GM12878 (cell line): ENCODE measurements at regions of chr15 and their contacts with region 1.

Region 1: DNA sequence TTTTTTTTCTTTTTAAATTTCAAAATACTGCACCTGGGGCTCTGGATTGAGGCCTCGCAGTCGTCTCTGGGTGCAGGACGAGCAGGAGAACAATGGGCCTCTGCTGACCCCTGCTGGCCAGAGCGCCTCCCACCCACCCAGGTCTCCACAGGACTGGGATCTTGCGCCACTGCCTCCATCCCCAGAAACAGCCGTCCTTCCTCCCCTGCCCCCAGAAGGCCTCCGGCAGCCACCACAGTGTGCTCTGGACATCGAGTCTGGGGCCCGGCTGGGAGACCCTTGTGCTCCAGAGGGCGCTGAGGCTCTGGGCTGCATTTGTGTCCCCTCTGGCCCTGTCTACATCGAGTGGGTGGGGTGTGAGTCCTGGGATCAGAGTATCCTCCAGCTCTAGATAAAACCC is 6.6 kb upstream of the ACSBG1 start:
- DNase-seq: no peak
- ATAC-seq: peak; percentile 99
- H3K4me3 ChIP-seq: no peak overlapping the region
- H3K27ac ChIP-seq: no peak overlapping the region
- H3K4me1 ChIP-seq: no peaks in the 10 kb centered on the region
- H3K27me3 ChIP-seq: no peaks in the 10 kb centered on the region
- CTCF ChIP-seq: peak; percentile 84 to 93 (median 88)
- EP300 ChIP-seq: no peak
- POLR2A ChIP-seq: no peak
- RAD21 ChIP-seq: peak; percentile 86

Region 2: DNA sequence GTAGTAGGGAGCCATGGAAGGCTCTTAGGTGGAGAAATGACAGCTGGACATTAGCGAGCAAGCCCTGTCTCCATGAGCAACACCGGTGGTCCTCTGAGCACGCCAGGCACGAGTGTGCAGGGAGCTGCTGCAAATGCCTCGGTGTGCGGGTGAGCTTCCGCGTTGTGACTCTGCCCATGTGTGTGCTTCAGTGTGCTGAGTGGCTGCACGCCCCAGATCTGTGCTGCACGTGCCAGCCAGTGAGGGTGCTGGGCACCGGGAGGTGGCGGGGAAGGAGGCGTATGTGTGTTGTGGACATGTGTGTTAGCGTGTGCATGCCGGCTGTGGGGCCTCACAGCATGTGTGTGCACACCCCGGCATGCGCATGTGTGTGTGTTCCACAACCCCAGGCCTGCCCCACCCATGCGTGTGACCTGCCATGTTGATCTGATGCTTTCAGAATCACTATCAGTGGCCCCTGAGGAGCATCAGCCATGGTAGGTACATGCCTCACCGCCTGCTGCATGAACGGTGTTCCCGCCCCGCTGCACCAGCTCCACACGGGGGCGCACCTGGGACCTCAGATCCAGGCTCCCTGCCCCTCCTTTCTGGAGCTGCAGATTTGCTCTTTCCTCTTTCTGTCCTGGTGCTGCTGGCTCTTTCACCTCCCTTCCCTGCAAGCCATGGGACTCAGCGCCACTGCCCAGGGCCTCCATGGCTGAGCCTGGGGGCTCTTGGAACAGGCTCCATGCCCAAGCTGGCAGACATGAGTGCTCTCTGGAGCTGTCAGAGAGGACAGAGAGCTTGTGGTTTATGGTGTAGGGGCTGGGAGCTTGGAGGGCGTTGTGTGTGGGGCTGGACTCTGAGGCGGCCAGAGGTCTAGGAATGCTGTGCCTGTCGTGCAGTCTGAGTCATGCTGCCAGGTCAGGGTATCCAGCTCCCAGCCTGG is 332.9 kb before region 1 on chr15:
- CTCF ChIA-PET with region 1: interaction called, 18 read pairs
- POLR2A ChIA-PET with region 1: no interaction called
- RAD21 ChIA-PET with region 1: no interaction called
- SMC1A ChIA-PET with region 1: interaction called, 3 read pairs
- in situ Hi-C with region 1: no loop called
- intact Hi-C with region 1: no loop called
- DNase-seq: no peak
- ATAC-seq: peak; percentile 83
- H3K4me3 ChIP-seq: no peak overlapping the region
- H3K27ac ChIP-seq: no peak overlapping the region
- H3K4me1 ChIP-seq: no peaks in the 10 kb centered on the region
- H3K27me3 ChIP-seq: no peaks in the 10 kb centered on the region; a peak in 1 of 4 replicates
- CTCF ChIP-seq: peak; percentile 37 to 59 (median 46)
- EP300 ChIP-seq: no peak
- POLR2A ChIP-seq: no peak
- RAD21 ChIP-seq: no peak

Region 3: GRCh38 chr15:77966540-77967290 is 274.3 kb before region 1 on chr15:
- CTCF ChIA-PET with region 1: interaction called, 20 read pairs
- POLR2A ChIA-PET with region 1: no interaction called
- RAD21 ChIA-PET with region 1: no interaction called
- SMC1A ChIA-PET with region 1: interaction called, 4 read pairs
- in situ Hi-C with region 1: no loop called
- intact Hi-C with region 1: no loop called
- DNase-seq: no peak
- ATAC-seq: peak; percentile 96
- H3K4me3 ChIP-seq: no peak overlapping the region
- H3K27ac ChIP-seq: no peak overlapping the region
- H3K4me1 ChIP-seq: peaks cover 6% of the 10 kb centered on the region; the same call in 1 of the 2 replicates
- H3K27me3 ChIP-seq: no peaks in the 10 kb centered on the region
- CTCF ChIP-seq: peak; percentile 83 to 85 (median 84)
- EP300 ChIP-seq: no peak
- POLR2A ChIP-seq: no peak
- RAD21 ChIP-seq: peak; percentile 86

Region 4: DNA sequence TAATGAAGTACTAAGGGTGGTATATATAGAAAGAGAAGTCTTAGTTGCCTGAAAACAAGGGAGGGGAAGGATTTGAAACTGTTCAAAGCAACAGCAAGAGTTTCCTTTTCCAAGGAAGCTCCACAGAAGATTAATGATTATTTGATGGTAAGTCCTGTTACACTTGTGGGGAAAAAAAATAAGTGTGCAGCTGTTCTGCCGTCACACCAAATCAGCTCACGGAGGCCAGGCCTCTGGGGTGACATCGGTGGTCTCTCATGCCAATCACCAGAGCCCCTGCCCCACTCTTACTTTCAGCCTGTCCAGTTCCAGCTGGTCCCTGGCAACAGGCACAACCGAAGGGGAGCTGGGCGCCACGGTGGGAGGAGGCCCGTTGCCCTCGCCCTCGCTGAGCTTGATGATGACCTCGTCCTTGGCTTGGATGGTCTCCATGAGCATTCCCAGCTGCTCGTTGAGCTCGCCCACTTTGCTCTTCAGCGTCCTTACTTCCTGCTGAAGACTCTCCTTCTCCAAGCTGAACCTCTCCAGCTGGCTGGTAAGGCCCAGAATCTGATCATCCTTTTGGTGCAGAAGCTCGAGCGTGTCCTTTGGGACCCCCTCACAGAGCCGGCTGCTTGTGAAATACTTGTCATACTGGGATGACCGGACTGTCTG is 217.0 kb before region 1 on chr15:
- CTCF ChIA-PET with region 1: no interaction called
- POLR2A ChIA-PET with region 1: no interaction called
- RAD21 ChIA-PET with region 1: no interaction called
- SMC1A ChIA-PET with region 1: no interaction called
- in situ Hi-C with region 1: no loop called
- intact Hi-C with region 1: no loop called
- DNase-seq: no peak
- ATAC-seq: no peak
- H3K4me3 ChIP-seq: no peak overlapping the region
- H3K27ac ChIP-seq: no peak overlapping the region
- H3K4me1 ChIP-seq: peaks cover 5% of the 10 kb centered on the region
- H3K27me3 ChIP-seq: no peaks in the 10 kb centered on the region
- CTCF ChIP-seq: no peak
- EP300 ChIP-seq: no peak
- POLR2A ChIP-seq: no peak
- RAD21 ChIP-seq: no peak

Region 5: GRCh38 chr15:78131295-78132061 is 109.5 kb before region 1 on chr15 and contains the start of gene CIB2:
- CTCF ChIA-PET with region 1: interaction called, 44 read pairs
- POLR2A ChIA-PET with region 1: no interaction called
- RAD21 ChIA-PET with region 1: interaction called, 22 read pairs
- SMC1A ChIA-PET with region 1: interaction called, 18 read pairs
- in situ Hi-C with region 1: no loop called
- intact Hi-C with region 1: loop called (anchors 1 kb)
- DNase-seq: no peak
- ATAC-seq: peak; percentile 93
- H3K4me3 ChIP-seq: peak within 1 kb of the TSS; percentile 88
- H3K27ac ChIP-seq: peak within 1 kb of the TSS; percentile 72
- H3K4me1 ChIP-seq: peaks cover 5% of the 10 kb centered on the region
- H3K27me3 ChIP-seq: no peaks in the 10 kb centered on the region
- CTCF ChIP-seq: peak; percentile 65 to 92 (median 73); a peak in 5 of 6 replicates
- EP300 ChIP-seq: no peak
- POLR2A ChIP-seq: peak; percentile 80
- RAD21 ChIP-seq: peak; percentile 73
- polyA plus RNA-seq, gene CIB2: 0.56 to 1.6 TPM

Region 6: DNA sequence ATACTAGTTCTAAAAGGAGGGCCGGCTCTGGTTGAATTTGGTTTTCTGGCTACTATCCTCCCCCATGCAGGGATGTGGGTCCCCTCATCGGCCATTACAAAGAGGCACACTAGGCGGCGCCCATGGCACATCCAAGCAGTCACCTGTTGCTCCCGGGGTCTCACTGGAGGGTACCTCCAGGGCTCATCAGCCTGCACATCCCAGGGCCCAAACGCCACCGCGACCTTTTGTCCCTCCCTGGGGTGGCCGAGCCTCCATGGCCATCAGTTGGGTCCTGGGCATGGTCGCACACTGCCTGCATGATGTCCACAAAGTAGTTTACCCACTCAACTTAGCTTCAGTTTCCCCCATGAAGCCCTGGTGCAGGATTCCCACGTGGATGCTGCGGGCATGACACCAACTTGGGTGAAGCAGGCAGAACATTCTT is 63.5 kb before region 1 on chr15:
- CTCF ChIA-PET with region 1: interaction called, 22 read pairs
- POLR2A ChIA-PET with region 1: no interaction called
- RAD21 ChIA-PET with region 1: interaction called, 13 read pairs
- SMC1A ChIA-PET with region 1: interaction called, 14 read pairs
- in situ Hi-C with region 1: no loop called
- intact Hi-C with region 1: loop called (anchors 1 kb)
- DNase-seq: no peak
- ATAC-seq: peak; percentile 77
- H3K4me3 ChIP-seq: no peak overlapping the region
- H3K27ac ChIP-seq: no peak overlapping the region
- H3K4me1 ChIP-seq: peaks cover 24% of the 10 kb centered on the region
- H3K27me3 ChIP-seq: no peaks in the 10 kb centered on the region
- CTCF ChIP-seq: peak; percentile 73 to 84 (median 76)
- EP300 ChIP-seq: no peak
- POLR2A ChIP-seq: no peak
- RAD21 ChIP-seq: peak; percentile 66

Region 7: DNA sequence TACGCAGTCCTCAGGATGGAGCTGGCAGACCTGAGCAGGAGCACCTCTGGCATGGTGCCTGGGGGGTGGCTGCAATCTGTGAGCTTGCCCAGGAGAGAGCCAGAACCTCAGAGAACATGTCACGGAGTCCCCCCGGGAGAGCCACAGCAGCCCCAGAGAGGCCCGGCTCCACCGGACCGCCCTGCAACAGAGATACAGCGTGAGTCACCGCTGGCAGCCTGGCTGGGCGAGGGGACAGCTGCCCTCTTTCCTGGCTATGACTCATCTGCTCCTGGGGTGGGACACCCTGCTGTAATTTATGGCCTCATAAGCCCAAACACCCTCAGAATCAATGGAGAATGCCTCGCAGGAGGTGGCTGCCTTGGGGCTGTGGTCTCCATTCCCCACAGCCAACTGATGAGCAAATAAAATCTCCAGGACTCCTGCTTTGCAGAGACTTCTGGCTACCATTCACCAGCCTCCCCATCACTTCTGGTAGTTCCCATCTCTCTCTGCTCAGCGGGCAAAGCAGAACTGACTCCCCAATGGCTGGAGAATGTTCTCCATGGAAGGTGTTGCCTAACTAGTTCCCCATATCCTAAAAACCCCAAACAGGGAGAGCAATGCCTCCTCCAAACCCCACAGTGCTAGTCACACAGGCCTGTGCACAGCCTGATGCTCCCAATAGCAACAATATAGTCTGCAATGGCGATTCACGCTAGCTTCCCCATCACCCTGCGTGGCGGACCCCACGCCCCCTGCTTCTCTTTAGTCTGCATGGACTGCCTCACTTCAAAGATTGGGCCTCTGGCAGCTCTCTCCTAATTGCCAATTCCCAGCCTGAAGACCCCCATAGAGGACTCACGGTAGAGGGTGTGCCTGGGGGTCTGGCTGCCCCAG is 28.2 kb before region 1 on chr15:
- CTCF ChIA-PET with region 1: interaction called, 15 read pairs
- POLR2A ChIA-PET with region 1: interaction called, 3 read pairs
- RAD21 ChIA-PET with region 1: no interaction called
- SMC1A ChIA-PET with region 1: interaction called, 5 read pairs
- in situ Hi-C with region 1: no loop called
- intact Hi-C with region 1: no loop called
- DNase-seq: no peak
- ATAC-seq: no peak
- H3K4me3 ChIP-seq: no peak overlapping the region
- H3K27ac ChIP-seq: no peak overlapping the region
- H3K4me1 ChIP-seq: no peaks in the 10 kb centered on the region
- H3K27me3 ChIP-seq: no peaks in the 10 kb centered on the region
- CTCF ChIP-seq: no peak
- EP300 ChIP-seq: no peak
- POLR2A ChIP-seq: no peak
- RAD21 ChIP-seq: no peak

Region 8: DNA sequence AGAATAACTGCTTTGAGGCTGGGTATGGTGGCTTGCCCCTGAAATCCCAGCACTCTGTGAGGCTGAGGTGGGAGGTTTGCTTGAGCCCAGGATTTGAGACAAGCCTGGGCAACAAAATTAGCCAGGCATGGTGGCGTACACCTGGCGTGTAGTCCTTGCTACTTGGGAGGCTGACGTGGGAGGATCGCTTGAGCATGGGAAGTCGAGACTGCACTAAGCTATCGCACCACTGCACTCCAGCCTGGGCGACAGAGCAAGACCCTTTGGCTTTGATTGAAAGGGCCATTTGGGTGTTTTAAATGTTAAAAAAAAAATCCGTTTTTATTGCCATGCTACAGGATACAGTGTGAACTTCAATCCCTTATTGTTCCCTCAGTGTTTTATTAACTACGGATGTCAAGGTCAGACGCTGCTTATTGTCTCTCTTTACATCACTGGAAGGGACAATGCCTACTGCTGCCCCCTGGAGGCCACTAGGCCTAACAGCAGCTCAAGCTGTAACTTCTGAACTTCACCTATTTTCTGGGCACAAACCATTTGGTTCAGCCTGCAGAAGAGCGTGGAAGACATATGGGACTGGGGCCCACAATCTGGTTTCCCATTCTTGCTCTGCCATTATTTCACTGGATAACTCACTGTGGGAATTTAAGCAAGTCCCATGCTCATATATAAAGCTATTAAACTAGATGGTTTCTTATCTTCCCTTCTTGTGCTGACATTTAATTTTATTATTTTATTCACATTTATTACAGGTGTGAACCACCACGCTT is 181.7 kb after region 1 on chr15:
- CTCF ChIA-PET with region 1: interaction called, 11 read pairs
- POLR2A ChIA-PET with region 1: no interaction called
- RAD21 ChIA-PET with region 1: no interaction called
- SMC1A ChIA-PET with region 1: no interaction called
- in situ Hi-C with region 1: no loop called
- intact Hi-C with region 1: no loop called
- DNase-seq: no peak
- ATAC-seq: peak; percentile 90
- H3K4me3 ChIP-seq: no peak overlapping the region
- H3K27ac ChIP-seq: no peak overlapping the region
- H3K4me1 ChIP-seq: no peaks in the 10 kb centered on the region
- H3K27me3 ChIP-seq: no peaks in the 10 kb centered on the region
- CTCF ChIP-seq: peak; percentile 90 to 94 (median 94)
- EP300 ChIP-seq: no peak
- POLR2A ChIP-seq: no peak
- RAD21 ChIP-seq: peak; percentile 69

Region 9: GRCh38 chr15:78509726-78510312 is 268.8 kb after region 1 on chr15:
- CTCF ChIA-PET with region 1: no interaction called
- POLR2A ChIA-PET with region 1: no interaction called
- RAD21 ChIA-PET with region 1: no interaction called
- SMC1A ChIA-PET with region 1: no interaction called
- in situ Hi-C with region 1: no loop called
- intact Hi-C with region 1: no loop called
- DNase-seq: no peak
- ATAC-seq: no peak
- H3K4me3 ChIP-seq: no peak overlapping the region
- H3K27ac ChIP-seq: no peak overlapping the region
- H3K4me1 ChIP-seq: no peaks in the 10 kb centered on the region
- H3K27me3 ChIP-seq: no peaks in the 10 kb centered on the region
- CTCF ChIP-seq: no peak
- EP300 ChIP-seq: no peak
- POLR2A ChIP-seq: no peak
- RAD21 ChIP-seq: no peak